A673 (cell line): ENCODE measurements at regions of chr19 and their contacts with region 1.

Region 1: DNA sequence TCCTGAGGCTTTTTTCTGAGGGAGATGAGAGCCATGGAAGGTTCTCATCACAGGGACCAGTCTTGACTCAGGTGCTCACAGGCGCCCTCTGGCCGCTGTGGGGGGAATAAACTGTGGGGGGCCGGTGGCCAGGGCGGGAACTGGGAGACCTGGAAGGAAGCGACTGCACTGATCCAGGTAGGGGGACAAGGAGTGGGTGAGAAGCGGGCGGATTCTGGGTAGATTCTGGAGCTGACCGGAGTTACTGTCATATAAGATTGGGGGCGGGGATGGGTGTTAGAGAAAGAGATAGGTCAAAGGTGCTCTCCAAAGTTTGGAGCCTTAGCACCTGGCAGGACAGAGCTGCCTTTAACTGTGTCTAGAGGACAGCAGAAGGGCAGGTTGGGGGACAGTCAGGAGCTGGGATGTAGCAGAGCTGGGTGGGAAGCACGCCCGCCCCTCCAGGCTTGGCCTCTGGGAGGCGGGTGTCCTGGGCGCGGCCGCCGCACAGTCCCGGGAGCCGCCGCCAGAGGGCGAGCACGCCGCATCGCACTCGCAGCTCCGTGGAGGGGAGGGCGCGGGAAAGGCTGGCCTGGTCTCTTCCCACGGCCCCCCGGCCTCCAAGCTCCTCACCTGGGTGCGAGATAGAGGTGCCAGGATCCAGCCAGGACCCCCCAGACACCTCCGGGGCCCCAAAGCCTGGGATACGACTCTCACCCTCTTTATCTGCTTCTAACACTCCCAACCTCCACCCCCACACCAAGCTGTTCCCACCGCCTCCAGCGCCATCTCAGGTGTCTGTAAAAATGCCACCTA is 4.2 kb upstream of the DAND5 start:
- DNase-seq: peak; percentile 85
- H3K4me3 ChIP-seq: peak overlapping the region; percentile 44
- H3K27ac ChIP-seq: peak overlapping the region; percentile 46
- H3K4me1 ChIP-seq: peaks cover 3% of the 10 kb centered on the region
- H3K27me3 ChIP-seq: no peaks in the 10 kb centered on the region
- CTCF ChIP-seq: peak; percentile 89

Region 2: DNA sequence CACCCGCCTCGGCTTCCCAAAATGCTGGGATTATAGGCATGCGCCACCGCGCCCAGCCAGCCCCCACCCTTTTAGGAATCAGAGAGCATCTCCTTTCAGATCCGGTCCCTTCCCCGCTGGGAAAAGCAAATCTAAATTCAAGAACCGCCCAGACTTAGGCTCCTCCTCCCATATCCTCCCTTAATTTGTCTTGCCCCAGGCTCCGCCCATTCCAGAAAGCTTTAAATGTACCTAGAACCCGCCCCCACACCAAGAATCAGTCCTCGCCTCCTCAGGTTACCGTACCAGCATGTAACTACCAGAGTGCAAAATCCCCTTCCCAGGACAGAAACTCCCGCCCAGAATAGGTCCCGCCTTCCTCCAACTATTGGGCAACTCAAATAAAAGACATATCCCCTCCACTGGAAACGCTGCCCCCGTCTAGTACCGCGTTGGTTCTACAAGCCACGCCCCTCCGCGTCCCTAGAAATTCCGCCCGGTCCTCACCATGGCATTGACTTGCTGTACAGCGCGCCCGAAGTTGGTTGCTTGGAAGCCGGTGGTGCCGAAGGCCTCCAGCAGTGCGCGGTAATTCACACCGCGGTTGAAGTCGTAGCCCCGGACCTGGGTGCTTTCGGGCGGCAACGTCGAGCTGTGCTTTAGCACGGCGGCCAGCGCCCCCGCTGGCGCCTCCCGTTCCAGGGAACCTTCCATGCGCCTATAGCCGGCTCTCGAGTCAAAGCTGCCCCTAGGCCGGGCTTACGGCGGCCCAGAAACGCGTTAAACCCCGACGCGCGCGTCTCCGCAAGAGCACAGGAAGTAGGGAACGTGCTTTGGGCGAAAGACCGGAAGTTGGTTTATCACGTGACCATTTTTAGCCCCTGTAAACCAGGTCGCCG is 283.9 kb before region 1 on chr19 and contains the start of gene DHPS:
- CTCF ChIA-PET with region 1: no interaction called
- POLR2A ChIA-PET with region 1: interaction called, 19 read pairs
- intact Hi-C with region 1: no loop called
- DNase-seq: peak; percentile 100
- H3K4me3 ChIP-seq: peak within 1 kb of the TSS; percentile 77
- H3K27ac ChIP-seq: peak within 1 kb of the TSS; percentile 100
- H3K4me1 ChIP-seq: no peaks in the 10 kb centered on the region
- H3K27me3 ChIP-seq: no peaks in the 10 kb centered on the region
- CTCF ChIP-seq: no peak
- total RNA-seq, gene DHPS: 117 and 127 TPM in 2 replicates

Region 3: GRCh38 chr19:12884926-12885748 is 80.1 kb before region 1 on chr19:
- CTCF ChIA-PET with region 1: interaction called, 5 read pairs
- POLR2A ChIA-PET with region 1: no interaction called
- intact Hi-C with region 1: loop called (anchors 2 kb)
- DNase-seq: peak; percentile 77
- H3K4me3 ChIP-seq: peak overlapping the region; percentile 46
- H3K27ac ChIP-seq: no peak overlapping the region
- H3K4me1 ChIP-seq: peaks cover 5% of the 10 kb centered on the region
- H3K27me3 ChIP-seq: no peaks in the 10 kb centered on the region
- CTCF ChIP-seq: peak; percentile 82

Region 4: DNA sequence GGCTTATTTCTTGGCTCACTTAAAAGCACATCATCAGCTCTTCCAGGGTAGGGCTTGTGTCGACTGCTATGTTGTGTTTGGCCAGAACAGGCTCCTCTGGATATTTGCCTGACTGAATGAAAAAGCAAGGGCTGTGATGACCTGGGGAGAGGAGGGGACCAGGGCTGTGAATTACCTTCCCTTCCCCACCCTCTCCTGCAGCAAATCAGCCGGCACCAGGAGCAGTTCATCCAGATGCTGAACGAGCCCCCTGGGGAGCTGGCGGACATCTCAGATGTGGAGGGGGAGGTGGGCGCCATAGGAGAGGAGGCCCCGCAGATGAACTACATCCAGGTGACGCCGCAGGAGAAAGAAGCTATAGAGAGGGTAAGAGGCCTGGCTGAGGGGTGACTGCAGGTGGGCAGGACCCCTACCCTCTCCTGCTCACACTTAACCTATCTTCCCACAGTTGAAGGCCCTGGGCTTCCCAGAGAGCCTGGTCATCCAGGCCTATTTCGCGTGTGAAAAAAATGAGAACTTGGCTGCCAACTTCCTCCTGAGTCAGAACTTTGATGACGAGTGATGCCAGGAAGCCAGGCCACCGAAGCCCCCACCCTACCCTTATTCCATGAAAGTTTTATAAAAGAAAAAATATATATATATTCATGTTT is 12.6 kb before region 1 on chr19:
- CTCF ChIA-PET with region 1: interaction called, 4 read pairs
- POLR2A ChIA-PET with region 1: interaction called, 17 read pairs
- intact Hi-C with region 1: no loop called
- DNase-seq: no peak
- H3K4me3 ChIP-seq: no peak overlapping the region
- H3K27ac ChIP-seq: peak overlapping the region; percentile 24
- H3K4me1 ChIP-seq: peaks cover 35% of the 10 kb centered on the region
- H3K27me3 ChIP-seq: no peaks in the 10 kb centered on the region
- CTCF ChIP-seq: no peak

Region 5: DNA sequence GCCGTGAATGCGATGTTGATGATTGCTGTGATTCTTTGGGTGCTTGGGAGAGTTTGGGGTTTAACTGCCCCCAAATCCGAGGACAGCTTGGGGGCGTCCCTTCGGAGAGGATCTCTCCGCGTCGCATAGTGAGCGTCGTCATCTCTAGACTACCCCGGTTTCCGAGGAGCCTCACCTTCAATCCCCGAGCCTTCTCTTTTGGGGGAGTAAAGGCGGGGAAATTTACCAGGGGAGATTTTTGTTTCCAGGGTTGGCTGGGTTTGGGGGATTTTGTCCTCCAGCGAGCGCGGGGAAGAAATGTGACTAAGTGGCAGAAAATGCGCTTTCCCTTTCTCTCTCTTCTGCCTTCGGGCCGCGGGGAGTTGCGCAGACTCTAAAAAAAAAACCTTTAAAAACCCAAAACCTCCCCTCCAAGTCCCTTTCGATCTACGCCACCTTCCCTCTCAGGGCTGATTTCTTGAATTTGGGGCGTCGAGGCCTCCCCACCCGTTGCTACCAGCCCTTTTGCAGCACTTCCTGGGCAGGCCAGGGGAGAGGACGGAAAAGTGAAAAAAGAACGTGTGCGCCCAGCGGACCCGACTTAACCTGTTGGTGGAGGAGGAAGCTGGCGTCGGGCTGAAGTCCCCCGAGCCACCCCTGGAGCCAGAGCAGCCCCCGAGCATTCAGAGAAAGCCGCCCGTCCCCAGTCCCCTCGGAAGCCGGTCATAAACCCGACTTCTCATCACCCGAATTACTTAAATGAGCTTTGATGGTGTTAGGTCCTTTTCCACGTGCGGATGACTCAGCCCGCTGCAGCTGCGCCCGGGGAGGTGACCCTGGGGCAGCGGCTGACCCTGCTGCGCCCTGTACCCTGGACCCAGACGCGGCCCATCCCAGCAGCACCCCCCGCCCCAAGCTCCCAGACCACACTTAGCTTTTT is 47.7 kb after region 1 on chr19:
- CTCF ChIA-PET with region 1: no interaction called
- POLR2A ChIA-PET with region 1: no interaction called
- intact Hi-C with region 1: no loop called
- DNase-seq: peak; percentile 39
- H3K4me3 ChIP-seq: peak overlapping the region; percentile 38
- H3K27ac ChIP-seq: peak overlapping the region; percentile 72
- H3K4me1 ChIP-seq: peaks cover 20% of the 10 kb centered on the region
- H3K27me3 ChIP-seq: no peaks in the 10 kb centered on the region
- CTCF ChIP-seq: no peak

Region 6: GRCh38 chr19:13060964-13061927 is 96.0 kb after region 1 on chr19:
- CTCF ChIA-PET with region 1: interaction called, 12 read pairs
- POLR2A ChIA-PET with region 1: no interaction called
- intact Hi-C with region 1: no loop called
- DNase-seq: peak; percentile 85
- H3K4me3 ChIP-seq: peak overlapping the region; percentile 43
- H3K27ac ChIP-seq: no peak overlapping the region
- H3K4me1 ChIP-seq: peaks cover 45% of the 10 kb centered on the region
- H3K27me3 ChIP-seq: no peaks in the 10 kb centered on the region
- CTCF ChIP-seq: peak; percentile 98

Region 7: DNA sequence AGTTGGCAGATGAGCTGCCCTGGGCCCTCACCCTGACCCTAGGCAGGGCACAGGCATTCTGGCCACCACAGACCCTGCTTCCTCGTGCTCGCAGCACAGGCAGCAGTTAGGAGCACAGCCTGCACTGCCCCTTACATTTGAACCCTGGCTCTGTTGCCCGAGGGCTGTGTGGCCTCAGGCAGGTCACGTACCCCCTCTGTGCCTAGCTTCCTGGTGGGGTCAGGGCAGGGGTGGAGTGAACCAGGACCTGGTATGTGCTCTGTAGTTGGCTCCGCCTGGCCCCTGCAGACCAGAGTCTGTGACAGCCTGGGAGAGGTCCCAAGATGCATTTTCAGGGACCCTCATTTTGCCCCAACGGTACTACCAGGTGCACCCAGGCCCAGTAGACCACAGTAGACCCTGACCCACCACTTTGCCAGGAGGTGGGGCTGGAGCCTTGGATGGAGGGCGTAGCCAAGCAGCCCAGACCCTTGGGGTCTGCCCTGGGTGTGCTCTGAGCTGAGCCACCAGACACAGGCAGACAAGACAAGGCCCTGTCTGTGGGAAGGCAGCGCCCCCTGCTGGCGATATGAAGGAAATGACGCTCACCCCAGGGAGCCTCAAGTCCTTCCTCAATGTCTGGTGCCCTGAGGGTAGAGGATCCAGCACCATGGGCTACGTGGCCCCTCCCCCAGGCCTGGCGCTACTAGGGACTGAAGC is 128.3 kb after region 1 on chr19:
- CTCF ChIA-PET with region 1: interaction called, 18 read pairs
- POLR2A ChIA-PET with region 1: no interaction called
- intact Hi-C with region 1: no loop called
- DNase-seq: peak; percentile 93
- H3K4me3 ChIP-seq: no peak overlapping the region
- H3K27ac ChIP-seq: peak overlapping the region; percentile 35
- H3K4me1 ChIP-seq: peaks cover 44% of the 10 kb centered on the region
- H3K27me3 ChIP-seq: no peaks in the 10 kb centered on the region
- CTCF ChIP-seq: peak; percentile 96